Activated T-helper 1 cell treated with anti-CD3 and anti-CD28 coated beads, Interleukin-12 subunit alpha, Interleukin-12 subunit beta, Interleukin-2, Interleukin-4 antibody, amounts not matched to agents 30 ng/mL and 10 ng/mL and 1 ng/mL, durations not matched to agents 14 hours and 24 hours and 36 hours (primary cell): ENCODE measurements at regions of chr16 and their contacts with region 1.

Region 1: DNA sequence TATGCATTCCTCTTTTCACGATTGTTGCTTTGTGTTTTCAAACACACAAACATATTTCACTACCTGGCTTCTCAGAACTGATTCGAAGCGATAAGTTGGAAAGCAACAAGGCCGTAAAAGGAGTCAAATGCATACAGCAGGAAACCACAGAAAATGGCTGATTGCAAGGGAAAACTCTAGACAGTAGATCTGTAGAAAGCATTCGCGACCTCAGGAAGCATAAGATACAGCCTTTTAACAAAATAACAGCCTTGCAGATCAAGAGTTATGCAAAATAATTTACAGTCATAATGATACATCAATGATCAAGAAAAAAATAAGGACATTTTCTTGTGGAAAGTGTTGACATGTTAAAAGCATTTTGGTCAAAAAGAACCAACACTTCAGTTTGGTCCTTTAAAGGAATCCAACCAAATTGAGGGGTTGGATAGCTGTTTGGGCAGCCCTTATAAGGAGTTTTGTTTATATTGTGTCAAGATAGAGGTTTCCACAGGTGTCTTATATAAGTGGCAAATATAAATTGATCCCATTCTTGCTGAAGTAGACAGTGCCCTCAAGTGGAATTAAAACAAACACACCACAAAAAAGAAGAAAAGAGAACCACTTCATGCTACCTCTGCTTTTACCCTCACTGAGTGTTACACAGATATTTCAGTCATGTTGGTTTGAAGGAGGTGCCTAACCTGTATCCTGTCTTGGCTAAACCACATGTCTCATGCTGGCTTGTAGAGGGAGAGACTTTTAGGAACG is 5.5 kb downstream of the CYLD start:
- DNase-seq: peak; percentile 40
- H3K4me3 Mint-ChIP-seq: peak overlapping the region; percentile 85
- H3K27ac Mint-ChIP-seq: peak overlapping the region; percentile 92
- H3K4me1 Mint-ChIP-seq: peaks cover 74% of the 10 kb centered on the region
- H3K27me3 Mint-ChIP-seq: no peaks in the 10 kb centered on the region

Region 2: GRCh38 chr16:50326949-50327402 is 420.4 kb before region 1 on chr16:
- intact Hi-C with region 1: loop called (anchors 2 kb)
- DNase-seq: peak; percentile 68
- H3K4me3 Mint-ChIP-seq: no peak overlapping the region
- H3K27ac Mint-ChIP-seq: no peak overlapping the region
- H3K4me1 Mint-ChIP-seq: peaks cover 45% of the 10 kb centered on the region
- H3K27me3 Mint-ChIP-seq: no peaks in the 10 kb centered on the region

Region 3: DNA sequence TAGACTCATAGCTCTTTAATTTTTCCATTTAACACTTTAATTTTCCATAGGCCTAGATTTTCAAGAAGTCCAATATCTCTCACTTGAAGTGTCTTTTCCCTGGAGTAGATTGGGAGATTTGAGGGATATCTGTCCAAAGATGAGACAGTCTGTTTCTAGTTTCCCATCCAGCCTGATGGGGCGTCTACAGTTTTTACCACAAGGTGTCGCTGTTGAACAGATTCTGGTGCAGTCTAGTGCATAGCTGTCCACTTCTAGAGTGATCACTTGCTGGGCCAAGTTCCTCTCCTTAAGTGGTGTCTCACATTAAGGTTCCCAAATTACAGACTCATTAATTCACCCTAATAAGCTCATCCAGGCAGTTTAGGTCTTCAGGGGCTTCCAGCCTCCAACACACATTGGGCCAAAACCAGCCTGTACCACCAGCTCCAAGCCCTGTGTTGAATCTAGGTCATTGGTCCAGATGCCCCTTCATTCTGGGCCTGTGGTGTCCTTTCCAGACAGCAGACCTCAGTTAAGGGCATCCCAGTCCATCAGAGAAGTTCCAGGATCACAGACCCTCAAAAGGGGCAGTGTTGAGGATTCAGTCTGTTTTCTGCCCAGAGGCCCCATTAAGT is 75.6 kb before region 1 on chr16:
- intact Hi-C with region 1: loop called (anchors 1 kb)
- DNase-seq: peak; percentile 43
- H3K4me3 Mint-ChIP-seq: no peak overlapping the region
- H3K27ac Mint-ChIP-seq: no peak overlapping the region
- H3K4me1 Mint-ChIP-seq: peaks cover 41% of the 10 kb centered on the region
- H3K27me3 Mint-ChIP-seq: no peaks in the 10 kb centered on the region

Region 4: GRCh38 chr16:50763211-50763610 is 15.8 kb after region 1 on chr16:
- intact Hi-C with region 1: loop called (anchors 1 kb)
- DNase-seq: no peak
- H3K4me3 Mint-ChIP-seq: no peak overlapping the region
- H3K27ac Mint-ChIP-seq: peak overlapping the region; percentile 13
- H3K4me1 Mint-ChIP-seq: peaks cover 84% of the 10 kb centered on the region
- H3K27me3 Mint-ChIP-seq: no peaks in the 10 kb centered on the region

Region 5: GRCh38 chr16:50806099-50807062 is 59.0 kb after region 1 on chr16:
- intact Hi-C with region 1: loop called (anchors 1 kb)
- DNase-seq: peak; percentile 78
- H3K4me3 Mint-ChIP-seq: peak overlapping the region; percentile 66
- H3K27ac Mint-ChIP-seq: peak overlapping the region; percentile 30
- H3K4me1 Mint-ChIP-seq: peaks cover 9% of the 10 kb centered on the region
- H3K27me3 Mint-ChIP-seq: no peaks in the 10 kb centered on the region